ENCODE measurements at regions of chr10 and their contacts with region 1.

Region 1: GRCh38 chr10:123607386-123607785 is 58.8 kb upstream of the GPR26 start:
- DNase-seq: no peak
- H3K4me3 ChIP-seq: no peak overlapping the region
- H3K27ac ChIP-seq: no peak overlapping the region
- H3K4me1 ChIP-seq: no peaks in the 10 kb centered on the region
- H3K27me3 ChIP-seq: peaks cover 0 to 17% of the 10 kb centered on the region in 2 donors
- CTCF ChIP-seq: no peak
- POLR2A ChIP-seq: no peak

Region 2: GRCh38 chr10:123673198-123673597 is 65.8 kb after region 1 on chr10:
- intact Hi-C with region 1: loop called (anchors 2 kb)
- DNase-seq: no peak
- H3K4me3 ChIP-seq: no peak overlapping the region
- H3K27ac ChIP-seq: no peak overlapping the region
- H3K4me1 ChIP-seq: no peaks in the 10 kb centered on the region
- H3K27me3 ChIP-seq: peaks cover 0 to 15% of the 10 kb centered on the region in 2 donors
- CTCF ChIP-seq: no peak
- POLR2A ChIP-seq: no peak